BJ (cell line): ENCODE measurements at regions of chr1 and their contacts with region 1.

Region 1: GRCh38 chr1:160291248-160292220 is 6.6 kb upstream of the PEX19 start:
- DNase-seq: no peak
- H3K4me3 ChIP-seq: no peak overlapping the region
- H3K27me3 ChIP-seq: no peaks in the 10 kb centered on the region
- CTCF ChIP-seq: peak; percentile 80

Region 2: GRCh38 chr1:160219062-160219929 is 72.2 kb before region 1 on chr1:
- CTCF ChIA-PET with region 1: interaction called, 17 read pairs
- POLR2A ChIA-PET with region 1: no interaction called
- DNase-seq: peak; percentile 50
- H3K4me3 ChIP-seq: no peak overlapping the region
- H3K27me3 ChIP-seq: no peaks in the 10 kb centered on the region
- CTCF ChIP-seq: peak; percentile 74

Region 3: DNA sequence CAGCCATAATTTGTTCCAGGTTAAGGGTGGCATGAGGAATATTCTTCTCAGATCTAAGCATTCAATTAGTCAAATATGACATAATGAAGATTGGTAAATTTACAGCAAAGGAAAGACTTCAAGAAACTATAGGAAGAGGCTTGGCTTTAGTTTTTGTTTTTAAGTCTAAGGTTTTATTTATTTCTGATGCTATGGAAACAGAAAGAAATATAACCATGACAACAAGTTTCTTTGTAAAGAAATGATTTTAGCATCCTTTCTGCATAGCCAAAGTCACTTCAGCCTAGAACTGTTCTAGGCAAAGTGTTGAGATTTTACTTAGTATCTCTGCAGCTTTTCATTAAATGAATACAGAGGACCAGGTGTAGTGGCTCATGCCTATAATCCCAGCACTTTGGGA is 58.6 kb before region 1 on chr1:
- CTCF ChIA-PET with region 1: no interaction called
- POLR2A ChIA-PET with region 1: no interaction called
- DNase-seq: no peak
- H3K4me3 ChIP-seq: no peak overlapping the region
- H3K27me3 ChIP-seq: no peaks in the 10 kb centered on the region
- CTCF ChIP-seq: no peak

Region 4: GRCh38 chr1:160307118-160307854 is 15.8 kb after region 1 on chr1:
- CTCF ChIA-PET with region 1: interaction called, 53 read pairs
- POLR2A ChIA-PET with region 1: no interaction called
- DNase-seq: no peak
- H3K4me3 ChIP-seq: no peak overlapping the region
- H3K27me3 ChIP-seq: no peaks in the 10 kb centered on the region
- CTCF ChIP-seq: no peak

Region 5: DNA sequence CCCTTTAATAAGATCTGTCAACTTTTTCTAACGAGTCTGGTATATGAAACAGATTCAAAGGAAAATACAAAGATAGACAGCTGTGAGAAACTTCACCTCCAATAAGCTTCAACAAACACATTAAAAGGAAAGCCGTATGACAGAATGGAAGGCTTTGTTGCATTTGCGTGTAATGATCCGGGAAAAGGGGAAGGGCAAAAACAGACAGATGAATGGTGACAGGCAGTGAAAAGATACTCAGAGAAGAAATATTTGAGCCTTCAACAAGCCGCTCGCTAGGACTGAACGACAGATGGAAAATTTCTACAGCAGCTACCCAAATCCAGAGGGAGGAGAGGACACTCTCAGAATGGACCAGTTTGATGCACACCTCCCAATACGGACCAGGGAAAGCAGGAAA is 36.6 kb after region 1 on chr1:
- CTCF ChIA-PET with region 1: interaction called, 18 read pairs
- POLR2A ChIA-PET with region 1: no interaction called
- DNase-seq: no peak
- H3K4me3 ChIP-seq: no peak overlapping the region
- H3K27me3 ChIP-seq: no peaks in the 10 kb centered on the region
- CTCF ChIP-seq: no peak

Region 6: GRCh38 chr1:160342526-160342925 is 51.0 kb after region 1 on chr1:
- CTCF ChIA-PET with region 1: interaction called, 14 read pairs
- POLR2A ChIA-PET with region 1: no interaction called
- DNase-seq: no peak
- H3K4me3 ChIP-seq: peak overlapping the region; percentile 89
- H3K27me3 ChIP-seq: no peaks in the 10 kb centered on the region
- CTCF ChIP-seq: no peak

Region 7: DNA sequence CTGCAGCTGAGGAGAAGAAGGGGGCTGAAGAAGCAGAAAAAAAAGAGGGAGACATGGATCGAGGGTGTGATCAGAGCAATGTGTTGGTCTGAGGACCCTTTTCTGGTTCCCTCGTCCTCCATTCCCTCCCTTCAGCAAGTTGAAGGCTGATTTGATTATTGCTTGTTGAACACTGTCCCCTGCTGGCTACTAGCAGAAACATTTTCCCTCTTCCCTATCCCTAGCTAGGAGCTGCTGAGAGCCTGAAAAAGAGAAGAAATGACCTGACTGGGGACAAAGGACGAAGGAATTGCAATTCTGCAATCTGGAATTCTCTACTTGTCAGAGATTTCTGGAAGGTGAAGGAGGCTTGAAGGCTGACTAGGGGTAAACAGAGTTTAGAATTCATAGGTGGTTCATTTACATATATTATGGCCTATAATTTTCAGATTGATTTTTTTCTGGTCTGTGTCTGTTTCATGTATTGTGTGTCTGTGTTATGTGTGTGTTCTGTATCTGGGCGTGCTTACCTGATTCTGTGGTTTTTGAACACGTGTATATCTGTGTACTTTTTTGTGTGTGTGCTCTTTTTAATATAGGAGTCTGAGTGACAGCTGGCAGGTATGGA is 85.1 kb after region 1 on chr1:
- CTCF ChIA-PET with region 1: interaction called, 27 read pairs
- POLR2A ChIA-PET with region 1: no interaction called
- DNase-seq: no peak
- H3K4me3 ChIP-seq: no peak overlapping the region
- H3K27me3 ChIP-seq: no peaks in the 10 kb centered on the region; the same call in 1 of the 2 replicates
- CTCF ChIP-seq: peak; percentile 97

Region 8: GRCh38 chr1:160437432-160438316 is 146.1 kb after region 1 on chr1:
- CTCF ChIA-PET with region 1: no interaction called
- POLR2A ChIA-PET with region 1: no interaction called
- DNase-seq: no peak
- H3K4me3 ChIP-seq: no peak overlapping the region
- H3K27me3 ChIP-seq: no peaks in the 10 kb centered on the region
- CTCF ChIP-seq: no peak